Activated CD4-positive, alpha-beta T cell treated with anti-CD3 and anti-CD28 coated beads, Interleukin-2, amount 10 ng/mL, durations not matched to agents 24 days and 14 days (primary cell): ENCODE measurements at regions of chr7 and their contacts with region 1.

Region 1: DNA sequence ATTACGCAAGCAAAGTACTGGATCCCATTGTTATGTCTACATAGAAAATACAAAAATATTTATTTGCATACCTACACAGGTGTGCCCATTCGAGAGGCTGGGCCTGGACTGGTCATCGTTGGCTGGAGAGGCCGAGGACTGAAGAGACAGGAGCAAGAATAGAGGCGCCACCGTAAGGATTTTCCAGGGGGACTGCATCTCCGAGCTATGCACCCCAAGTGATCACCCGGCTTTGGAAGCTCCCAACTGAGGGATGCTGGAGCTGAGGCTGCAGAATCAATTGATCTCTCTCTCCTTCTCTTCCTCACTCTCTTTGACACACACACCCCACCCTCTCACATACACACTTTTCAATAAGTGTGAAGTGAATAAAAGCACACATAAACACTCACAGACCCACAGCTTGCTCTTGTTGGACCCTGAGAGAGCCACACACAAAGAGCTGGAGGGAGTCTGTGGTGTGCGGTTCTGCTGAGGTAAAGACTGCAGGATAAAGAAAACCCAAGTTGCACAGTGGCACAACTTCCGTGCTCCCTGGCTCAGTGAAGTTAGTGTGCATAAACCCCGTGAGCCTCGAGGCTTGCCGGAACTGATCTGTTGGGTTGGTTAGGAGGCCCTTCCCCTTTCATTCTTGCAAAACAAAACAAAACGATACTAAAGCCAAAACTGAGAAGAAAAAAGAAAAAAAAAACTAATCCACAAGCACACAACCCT is at the start of gene AOAH:
- DNase-seq: peak; percentile 95
- H3K4me3 Mint-ChIP-seq: peak within 1 kb of the TSS; percentile 94
- H3K27ac Mint-ChIP-seq: peak within 1 kb of the TSS; percentile 97
- H3K4me1 Mint-ChIP-seq: peaks cover 74% of the 10 kb centered on the region
- H3K27me3 Mint-ChIP-seq: no peaks in the 10 kb centered on the region
- total RNA-seq, gene AOAH: 17.6 and 17.8 TPM in 2 replicates

Region 2: DNA sequence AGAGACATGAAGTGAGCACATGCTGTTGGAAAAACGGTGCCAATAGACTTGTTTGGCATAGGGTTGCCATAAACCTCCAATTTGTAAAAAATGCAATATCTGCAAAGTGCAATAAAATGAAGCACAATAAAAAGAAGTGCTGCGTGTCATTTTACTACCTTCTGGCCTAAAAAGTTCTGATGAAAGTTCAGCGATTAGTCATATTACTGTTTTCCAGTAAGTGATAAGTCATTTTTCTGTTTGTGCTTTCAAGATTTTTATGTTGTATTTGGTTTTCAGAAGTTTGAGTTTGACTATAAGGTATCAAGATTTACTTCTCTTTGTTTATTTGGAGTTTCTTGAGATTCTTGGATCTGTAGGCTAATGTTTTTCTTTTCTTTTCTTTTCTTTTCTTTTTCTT is 16.6 kb before region 1 on chr7:
- intact Hi-C with region 1: loop called (anchors 1 kb)
- DNase-seq: no peak
- H3K4me3 Mint-ChIP-seq: peak overlapping the region; percentile 42
- H3K27ac Mint-ChIP-seq: peak overlapping the region; percentile 85
- H3K4me1 Mint-ChIP-seq: peaks cover 64% of the 10 kb centered on the region
- H3K27me3 Mint-ChIP-seq: no peaks in the 10 kb centered on the region

Region 3: GRCh38 chr7:36765605-36766004 is 41.5 kb after region 1 on chr7:
- intact Hi-C with region 1: loop called (anchors 1 kb)
- DNase-seq: no peak
- H3K4me3 Mint-ChIP-seq: no peak overlapping the region
- H3K27ac Mint-ChIP-seq: peak overlapping the region; percentile 13
- H3K4me1 Mint-ChIP-seq: peaks cover 15% of the 10 kb centered on the region
- H3K27me3 Mint-ChIP-seq: no peaks in the 10 kb centered on the region

Region 4: DNA sequence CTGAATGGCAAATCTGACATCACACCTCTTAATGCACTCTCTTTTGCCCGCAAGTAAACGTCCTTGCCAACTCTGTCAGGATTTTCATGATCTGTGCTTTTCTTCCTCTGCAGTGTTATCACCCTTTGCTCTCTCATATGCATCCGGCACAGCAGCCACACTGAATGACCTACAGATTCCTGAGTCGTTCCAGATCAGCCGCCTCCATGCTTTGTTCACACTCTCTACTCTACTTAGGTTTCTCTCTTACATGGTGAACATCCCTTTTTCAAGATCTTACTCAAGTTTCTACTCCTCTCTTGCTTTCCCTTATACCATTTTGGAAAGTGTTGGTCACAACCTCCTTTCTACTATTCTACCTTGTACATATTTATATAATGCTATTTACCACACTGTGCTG is 127.9 kb after region 1 on chr7:
- intact Hi-C with region 1: loop called (anchors 5 kb)
- DNase-seq: no peak
- H3K4me3 Mint-ChIP-seq: peak overlapping the region; percentile 36
- H3K27ac Mint-ChIP-seq: peak overlapping the region; percentile 79
- H3K4me1 Mint-ChIP-seq: peaks cover 24% of the 10 kb centered on the region
- H3K27me3 Mint-ChIP-seq: no peaks in the 10 kb centered on the region

Region 5: DNA sequence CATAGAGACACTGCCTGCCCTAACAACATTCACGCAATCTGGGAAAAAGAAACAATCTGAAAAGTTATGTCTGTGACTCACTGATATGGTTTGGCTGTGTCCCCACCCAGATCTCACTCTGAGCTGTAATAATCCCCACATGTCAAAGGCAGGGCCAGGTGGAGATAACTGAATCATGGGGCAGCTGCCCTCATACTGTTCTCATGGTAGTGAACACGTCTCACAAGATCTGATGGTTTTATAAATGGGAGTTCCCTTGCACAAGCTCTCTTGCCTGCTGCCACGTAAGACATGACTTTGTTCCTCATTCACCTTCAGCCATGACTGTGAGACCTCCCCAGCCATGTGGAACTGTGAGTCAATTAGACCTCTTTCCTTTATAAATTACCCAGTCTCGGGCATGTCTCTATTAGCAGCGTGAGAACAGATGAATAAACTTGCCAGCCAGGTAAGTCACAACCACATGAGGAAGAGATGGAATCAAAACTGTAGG is 341.7 kb after region 1 on chr7:
- intact Hi-C with region 1: loop called (anchors 5 kb)
- DNase-seq: no peak
- H3K4me3 Mint-ChIP-seq: peak overlapping the region; percentile 8
- H3K27ac Mint-ChIP-seq: peak overlapping the region; percentile 90
- H3K4me1 Mint-ChIP-seq: peaks cover 42% of the 10 kb centered on the region
- H3K27me3 Mint-ChIP-seq: no peaks in the 10 kb centered on the region